Transverse colon (tissue), 4 donors: ENCODE measurements at regions of chr13 and their contacts with region 1.

Region 1: GRCh38 chr13:37878496-37878895 is 8.9 kb upstream of the TRPC4 start:
- DNase-seq: no peak
- H3K4me3 ChIP-seq: no peak overlapping the region
- H3K27ac ChIP-seq: no peak overlapping the region
- H3K4me1 ChIP-seq: no peaks in the 10 kb centered on the region
- H3K27me3 ChIP-seq: no peaks in the 10 kb centered on the region
- CTCF ChIP-seq: no peak
- EP300 ChIP-seq: no peak
- POLR2A ChIP-seq: no peak

Region 2: DNA sequence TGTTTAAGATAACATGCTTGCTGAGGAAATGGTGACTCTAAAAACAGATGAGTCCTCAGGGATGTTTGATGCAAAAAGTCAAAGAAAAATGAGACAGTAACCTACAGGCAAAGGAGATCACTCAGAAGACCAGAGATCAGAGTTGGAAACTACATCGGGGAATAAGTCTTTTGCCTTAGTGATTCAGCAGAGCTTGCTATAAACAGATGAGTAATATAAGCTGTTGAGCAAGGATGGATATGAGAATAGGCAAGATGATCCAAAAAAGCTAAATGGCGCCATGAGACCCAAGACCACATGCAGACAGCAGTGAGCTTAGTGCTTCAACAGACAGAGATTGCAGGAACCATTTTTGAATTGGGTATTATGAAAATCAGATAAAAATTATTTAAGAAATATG is 448.5 kb before region 1 on chr13:
- in situ Hi-C with region 1: no loop called
- intact Hi-C with region 1: no loop called
- DNase-seq: no peak
- H3K4me3 ChIP-seq: no peak overlapping the region
- H3K27ac ChIP-seq: no peak overlapping the region
- H3K4me1 ChIP-seq: no peaks in the 10 kb centered on the region
- H3K27me3 ChIP-seq: no peaks in the 10 kb centered on the region
- CTCF ChIP-seq: no peak
- EP300 ChIP-seq: no peak
- POLR2A ChIP-seq: no peak

Region 3: DNA sequence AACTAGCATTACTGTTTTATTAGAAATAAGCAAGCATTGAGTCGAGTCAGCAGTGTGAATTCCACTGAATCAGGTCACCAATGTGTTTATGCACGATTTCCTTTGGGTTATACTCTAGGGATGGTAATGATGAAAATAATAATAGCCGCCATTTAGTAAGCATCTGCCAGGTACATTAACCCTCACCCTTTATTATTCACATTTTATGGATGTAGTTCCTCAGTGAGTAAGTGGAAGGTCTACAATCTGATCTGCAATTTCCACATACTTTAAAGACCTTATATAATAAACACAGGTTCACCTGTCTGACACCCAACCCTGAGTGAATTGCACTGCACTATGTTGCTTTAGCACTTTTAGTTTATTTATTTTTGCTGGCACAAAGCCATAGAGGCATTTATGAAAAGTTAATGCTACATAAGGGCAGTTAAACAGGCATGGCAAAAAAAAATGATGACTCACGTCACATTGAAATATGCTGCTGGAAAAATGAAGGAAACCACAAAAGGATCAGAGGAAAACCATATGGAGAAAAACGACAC is 131.4 kb before region 1 on chr13:
- in situ Hi-C with region 1: no loop called
- intact Hi-C with region 1: no loop called
- DNase-seq: no peak
- H3K4me3 ChIP-seq: no peak overlapping the region
- H3K27ac ChIP-seq: no peak overlapping the region
- H3K4me1 ChIP-seq: no peaks in the 10 kb centered on the region
- H3K27me3 ChIP-seq: no peaks in the 10 kb centered on the region
- CTCF ChIP-seq: no peak
- EP300 ChIP-seq: no peak
- POLR2A ChIP-seq: no peak

Region 4: DNA sequence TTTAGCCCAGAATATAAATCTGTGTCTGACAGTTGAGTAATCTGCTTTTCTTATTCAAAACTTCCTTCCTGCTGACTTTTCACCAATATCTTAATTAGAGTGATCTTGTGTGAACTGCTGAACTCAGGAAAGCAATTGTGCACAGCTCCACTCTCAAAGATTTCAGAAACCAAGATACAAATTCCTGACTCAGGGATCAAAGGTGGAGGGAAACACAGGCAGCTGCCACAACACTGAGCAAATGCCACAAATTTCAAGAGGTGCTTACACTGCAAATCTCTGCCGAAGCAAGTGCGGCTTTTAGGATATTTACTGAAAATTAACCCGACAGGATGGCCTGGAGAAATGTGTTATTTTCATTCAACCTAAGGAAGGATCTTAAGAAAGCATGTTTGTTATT is 1000.8 kb after region 1 on chr13:
- in situ Hi-C with region 1: no loop called
- intact Hi-C with region 1: loop called (anchors 5 kb)
- DNase-seq: no peak
- H3K4me3 ChIP-seq: no peak overlapping the region
- H3K27ac ChIP-seq: no peak overlapping the region
- H3K4me1 ChIP-seq: no peaks in the 10 kb centered on the region
- H3K27me3 ChIP-seq: no peaks in the 10 kb centered on the region
- CTCF ChIP-seq: no peak
- EP300 ChIP-seq: no peak
- POLR2A ChIP-seq: no peak